ENCODE measurements at regions of chr15 and their contacts with region 1.

Region 1: DNA sequence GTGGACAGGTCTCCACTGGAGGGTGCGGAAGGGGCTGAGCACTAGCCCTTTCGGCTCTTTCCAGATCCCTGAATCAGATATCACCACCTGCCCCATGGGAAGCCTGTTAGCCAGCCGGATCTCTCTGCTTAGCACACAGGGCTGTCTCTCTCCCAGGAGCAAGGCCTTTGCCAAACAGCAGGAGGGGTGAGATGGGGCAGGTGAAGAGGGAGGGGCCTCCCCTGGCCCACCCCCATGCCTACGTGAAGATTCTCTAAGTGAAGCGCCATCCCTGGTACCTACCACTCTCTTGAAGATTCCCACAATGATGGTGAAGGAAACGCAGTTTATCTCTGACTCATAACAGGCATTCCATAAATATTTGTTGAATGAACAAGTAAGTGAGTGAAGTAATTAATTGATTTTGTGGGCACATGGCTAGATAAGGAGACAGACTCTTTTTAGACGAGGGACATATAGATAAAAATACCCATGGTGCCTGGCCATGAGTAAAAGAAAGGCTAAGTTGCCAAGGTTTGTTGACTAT is 19.6 kb upstream of the HCN4 start:
- DNase-seq: no peak
- ATAC-seq: no peak
- H3K4me3 Mint-ChIP-seq: no peak overlapping the region
- H3K27ac Mint-ChIP-seq: no peak overlapping the region
- H3K4me1 Mint-ChIP-seq: no peaks in the 10 kb centered on the region
- H3K27me3 Mint-ChIP-seq: peaks cover 12% of the 10 kb centered on the region

Region 2: GRCh38 chr15:73325193-73325861 is 63.0 kb before region 1 on chr15:
- CTCF ChIA-PET with region 1: no interaction called
- POLR2A ChIA-PET with region 1: no interaction called
- intact Hi-C with region 1: loop called in 1 of 2 experiments (anchors 10 kb)
- DNase-seq: peak; percentile 37
- ATAC-seq: no peak
- H3K4me3 Mint-ChIP-seq: no peak overlapping the region
- H3K27ac Mint-ChIP-seq: no peak overlapping the region
- H3K4me1 Mint-ChIP-seq: no peaks in the 10 kb centered on the region
- H3K27me3 Mint-ChIP-seq: peaks cover 3% of the 10 kb centered on the region

Region 3: GRCh38 chr15:73482166-73482565 is 93.8 kb after region 1 on chr15:
- CTCF ChIA-PET with region 1: no interaction called
- POLR2A ChIA-PET with region 1: no interaction called
- intact Hi-C with region 1: no loop called
- DNase-seq: no peak
- ATAC-seq: no peak
- H3K4me3 Mint-ChIP-seq: no peak overlapping the region
- H3K27ac Mint-ChIP-seq: no peak overlapping the region
- H3K4me1 Mint-ChIP-seq: no peaks in the 10 kb centered on the region
- H3K27me3 Mint-ChIP-seq: peaks cover 12% of the 10 kb centered on the region

Measured in activated CD4-positive, alpha-beta T cell treated with anti-CD3 and anti-CD28 coated beads for 36 hours (primary cell).